T-cell (primary cell): ENCODE measurements at regions of chr4 and their contacts with region 1.

Region 1: GRCh38 chr4:1573830-1574469 is 110.2 kb downstream of the FAM53A start:
- DNase-seq: no peak
- ATAC-seq: no peak
- H3K4me3 ChIP-seq: no peak overlapping the region
- H3K4me3 Mint-ChIP-seq: no peak overlapping the region
- H3K27ac ChIP-seq: no peak overlapping the region
- H3K27ac Mint-ChIP-seq: no peak overlapping the region
- H3K4me1 ChIP-seq: peaks cover 0 to 8% of the 10 kb centered on the region in 2 experiments
- H3K4me1 Mint-ChIP-seq: peaks cover 0 to 7% (median 5%) of the 10 kb centered on the region in 3 donors
- H3K27me3 ChIP-seq: peaks cover 0 to 14% of the 10 kb centered on the region in 2 experiments
- H3K27me3 Mint-ChIP-seq: peaks cover 0 to 2% of the 10 kb centered on the region in 2 donors

Region 2: DNA sequence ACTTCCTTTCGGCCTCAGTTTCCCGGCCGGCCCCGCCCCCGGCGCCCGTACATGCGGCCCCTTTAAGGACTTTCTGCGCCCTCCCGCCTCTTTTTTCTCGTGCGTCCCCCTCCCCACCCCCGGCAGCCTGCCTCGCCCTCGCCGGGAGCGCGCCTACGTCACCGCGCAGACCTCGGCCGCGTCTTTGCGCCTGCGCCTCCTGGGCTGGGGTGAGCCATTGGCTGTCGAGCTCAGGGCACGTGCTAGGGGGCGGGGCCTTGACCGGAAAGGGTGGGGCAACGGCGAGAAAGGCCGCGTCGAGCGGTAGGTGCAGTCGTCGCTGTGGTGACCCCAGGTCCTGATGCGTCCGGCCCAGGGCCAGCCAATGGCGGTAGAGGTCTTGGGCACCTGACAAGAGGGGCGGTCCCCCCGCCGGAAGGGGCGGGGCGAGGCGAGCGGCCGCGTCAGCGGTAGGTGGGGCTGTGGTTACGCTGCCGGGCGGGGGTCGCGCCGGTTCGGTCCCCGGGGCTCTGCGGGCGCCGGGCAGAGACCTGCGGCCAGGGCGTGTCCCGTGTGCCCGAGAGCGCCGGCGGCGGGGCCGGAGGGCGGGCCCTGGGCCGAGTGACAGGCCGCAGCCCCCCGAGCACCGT is 227.1 kb before region 1 on chr4 and contains the start of gene UVSSA:
- CTCF ChIA-PET with region 1: no interaction called
- POLR2A ChIA-PET with region 1: no interaction called
- DNase-seq: peak; percentile 99 to 100 (median 100)
- ATAC-seq: peak; percentile 91 to 93 (median 92)
- H3K4me3 ChIP-seq: peak within 1 kb of the TSS; percentile 74 to 75
- H3K4me3 Mint-ChIP-seq: peak within 1 kb of the TSS; percentile 86 to 92 (median 88)
- H3K27ac ChIP-seq: peak within 1 kb of the TSS; percentile 91
- H3K27ac Mint-ChIP-seq: peak within 1 kb of the TSS; percentile 92 to 94
- H3K4me1 ChIP-seq: peaks cover 0 to 47% of the 10 kb centered on the region in 2 experiments
- H3K4me1 Mint-ChIP-seq: peaks cover 38 to 47% (median 45%) of the 10 kb centered on the region in 3 donors
- H3K27me3 ChIP-seq: no peaks in the 10 kb centered on the region
- H3K27me3 Mint-ChIP-seq: no peaks in the 10 kb centered on the region
- total RNA-seq, gene UVSSA: 39.9 to 53.7 (median 42.7) TPM

Region 3: DNA sequence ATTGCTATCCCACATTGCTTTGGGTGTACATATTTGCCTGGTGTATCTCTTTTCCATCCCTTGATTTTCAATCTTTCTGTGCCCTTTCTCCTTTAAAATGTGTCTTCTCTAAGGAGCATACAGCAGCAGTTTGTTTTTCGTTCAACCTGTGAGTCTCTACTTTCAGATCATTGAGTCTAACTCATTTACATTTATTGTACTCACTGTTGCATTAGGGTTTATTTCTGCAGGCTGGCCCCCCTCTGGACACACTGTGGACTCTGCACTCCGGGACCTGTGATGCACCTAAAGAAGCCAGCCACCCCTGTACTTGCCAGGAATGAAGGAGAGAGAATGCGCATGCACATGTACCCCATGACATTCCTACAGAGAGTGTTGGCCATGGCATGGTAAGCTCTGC is 17.2 kb after region 1 on chr4:
- CTCF ChIA-PET with region 1: interaction called in 1 of 2 experiments, 12 read pairs
- POLR2A ChIA-PET with region 1: no interaction called
- DNase-seq: no peak
- ATAC-seq: no peak
- H3K4me3 ChIP-seq: no peak overlapping the region
- H3K4me3 Mint-ChIP-seq: no peak overlapping the region
- H3K27ac ChIP-seq: no peak overlapping the region
- H3K27ac Mint-ChIP-seq: no peak overlapping the region
- H3K4me1 ChIP-seq: no peaks in the 10 kb centered on the region
- H3K4me1 Mint-ChIP-seq: no peaks in the 10 kb centered on the region
- H3K27me3 ChIP-seq: peaks cover 0 to 25% of the 10 kb centered on the region in 2 experiments
- H3K27me3 Mint-ChIP-seq: peaks cover 0 to 9% of the 10 kb centered on the region in 2 donors

Region 4: GRCh38 chr4:1604711-1605205 is 30.8 kb after region 1 on chr4:
- CTCF ChIA-PET with region 1: no interaction called
- POLR2A ChIA-PET with region 1: no interaction called
- DNase-seq: peak in 23 of 35 experiments; percentile 23 to 75 (median 57)
- ATAC-seq: peak; percentile 66 to 87 (median 79)
- H3K4me3 ChIP-seq: peak overlapping the region; percentile 47 to 49
- H3K4me3 Mint-ChIP-seq: peak overlapping the region in 2 of 3 donors; percentile 63 to 75
- H3K27ac ChIP-seq: peak overlapping the region; percentile 72
- H3K27ac Mint-ChIP-seq: peak overlapping the region in 1 of 2 donors; percentile 95
- H3K4me1 ChIP-seq: peaks cover 0 to 34% of the 10 kb centered on the region in 2 experiments
- H3K4me1 Mint-ChIP-seq: peaks cover 0 to 20% (median 15%) of the 10 kb centered on the region in 3 donors
- H3K27me3 ChIP-seq: no peaks in the 10 kb centered on the region
- H3K27me3 Mint-ChIP-seq: no peaks in the 10 kb centered on the region